Activated CD4-positive, alpha-beta T cell treated with anti-CD3 and anti-CD28 coated beads for 36 hours (primary cell): ENCODE measurements at regions of chr1 and their contacts with region 1.

Region 1: GRCh38 chr1:53860967-53861411 is 22.9 kb upstream of the NDC1 start:
- DNase-seq: peak; percentile 65
- ATAC-seq: peak; percentile 88
- H3K4me3 Mint-ChIP-seq: no peak overlapping the region
- H3K27ac Mint-ChIP-seq: no peak overlapping the region
- H3K4me1 Mint-ChIP-seq: peaks cover 12% of the 10 kb centered on the region
- H3K27me3 Mint-ChIP-seq: no peaks in the 10 kb centered on the region

Region 2: DNA sequence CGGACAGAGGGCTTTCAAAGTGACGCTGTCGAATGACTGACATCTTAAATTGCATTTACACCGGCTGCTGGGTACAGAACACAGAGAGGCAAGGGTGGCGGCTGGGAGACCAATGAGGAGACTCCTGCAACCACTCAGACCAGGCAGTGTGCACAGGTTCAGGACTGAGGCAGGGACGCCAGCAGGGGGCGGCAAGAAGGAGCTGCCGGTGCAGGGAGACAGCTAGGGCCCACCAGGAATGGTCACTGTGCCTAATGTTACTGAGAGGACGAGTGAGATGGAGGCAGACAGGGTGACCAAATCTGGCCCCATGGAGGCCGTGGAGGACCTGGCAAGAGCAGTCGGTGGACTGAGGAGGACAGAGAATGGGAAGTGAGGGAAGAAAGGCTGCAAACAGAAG is 145.5 kb before region 1 on chr1:
- CTCF ChIA-PET with region 1: no interaction called
- POLR2A ChIA-PET with region 1: no interaction called
- intact Hi-C with region 1: no loop called
- DNase-seq: peak; percentile 50
- ATAC-seq: peak; percentile 55
- H3K4me3 Mint-ChIP-seq: no peak overlapping the region
- H3K27ac Mint-ChIP-seq: no peak overlapping the region
- H3K4me1 Mint-ChIP-seq: no peaks in the 10 kb centered on the region
- H3K27me3 Mint-ChIP-seq: no peaks in the 10 kb centered on the region

Region 3: DNA sequence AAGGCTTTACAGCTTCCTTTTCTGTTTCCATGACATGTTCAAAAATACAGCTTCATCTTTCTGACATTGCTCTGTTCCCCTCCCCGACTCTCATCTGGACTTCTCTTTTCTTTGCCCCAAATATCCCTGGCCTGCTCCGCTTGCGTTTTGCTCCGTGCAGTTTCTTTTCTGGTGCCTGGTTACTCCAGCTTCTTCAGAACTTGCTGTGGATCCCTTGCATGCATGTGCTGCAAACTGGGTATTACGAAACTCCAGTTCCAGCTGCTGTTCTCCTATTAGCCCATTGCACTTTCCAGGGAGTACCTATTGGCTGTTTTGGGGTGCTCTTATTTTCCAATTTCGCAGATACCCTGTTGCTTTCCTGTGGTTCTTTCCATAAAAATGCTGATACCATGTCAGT is 13.0 kb before region 1 on chr1:
- CTCF ChIA-PET with region 1: interaction called, 30 read pairs
- POLR2A ChIA-PET with region 1: interaction called, 3 read pairs
- intact Hi-C with region 1: no loop called
- DNase-seq: no peak
- ATAC-seq: no peak
- H3K4me3 Mint-ChIP-seq: no peak overlapping the region
- H3K27ac Mint-ChIP-seq: no peak overlapping the region
- H3K4me1 Mint-ChIP-seq: no peaks in the 10 kb centered on the region
- H3K27me3 Mint-ChIP-seq: peaks cover 5% of the 10 kb centered on the region

Region 4: DNA sequence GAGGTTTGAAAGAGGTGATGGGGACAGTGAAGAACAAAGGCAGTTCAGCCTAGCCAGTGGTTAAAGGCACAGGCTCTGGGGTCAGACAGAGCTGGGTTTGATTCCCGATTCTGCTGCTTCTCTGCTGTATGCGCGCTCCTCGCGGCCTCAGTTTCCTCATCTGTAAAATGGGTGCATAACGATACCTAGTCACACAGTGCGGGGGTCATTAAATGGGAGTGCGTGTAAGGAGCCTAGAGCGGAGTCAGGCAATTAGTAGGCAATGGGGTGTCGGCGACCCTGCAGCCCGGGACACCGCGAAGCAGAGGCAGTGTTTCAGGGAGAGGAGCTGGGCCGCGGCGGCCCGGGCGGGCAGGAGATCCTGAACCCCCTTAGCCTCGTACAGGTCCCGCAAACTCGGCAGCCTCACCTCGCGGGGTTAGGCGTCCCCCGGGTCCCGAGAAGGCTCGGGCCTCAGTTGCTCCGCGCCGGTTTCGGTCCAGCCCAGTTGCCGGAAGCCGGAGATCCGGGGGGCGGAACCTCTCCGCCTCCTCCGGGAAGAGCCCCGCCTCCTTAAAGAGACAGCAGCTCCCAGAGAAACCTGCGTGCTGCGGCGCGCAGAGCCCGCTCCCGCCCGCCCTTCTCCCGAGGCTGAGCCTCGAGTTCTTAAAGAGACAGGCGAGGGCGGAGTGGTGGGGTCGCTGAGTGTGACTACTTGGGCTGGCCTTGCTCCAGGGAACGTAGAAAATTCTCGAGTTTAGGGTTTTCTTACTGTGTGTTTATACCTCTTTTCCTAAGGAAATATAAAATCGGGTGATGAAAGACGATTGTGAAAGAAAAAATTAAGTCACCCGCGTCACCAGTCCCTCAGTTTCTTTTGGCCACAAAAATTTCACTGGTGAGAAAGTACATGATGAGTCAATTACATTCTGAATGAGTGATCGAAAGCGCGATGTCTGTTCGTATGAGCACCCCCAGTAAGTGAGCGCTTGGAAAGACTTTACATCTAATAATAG is 28.6 kb after region 1 on chr1 and contains the start of gene YIPF1:
- CTCF ChIA-PET with region 1: interaction called, 8 read pairs
- POLR2A ChIA-PET with region 1: no interaction called
- intact Hi-C with region 1: loop called in 1 of 2 experiments (anchors 2 kb)
- DNase-seq: peak; percentile 93
- ATAC-seq: peak; percentile 90
- H3K4me3 Mint-ChIP-seq: peak within 1 kb of the TSS; percentile 96
- H3K27ac Mint-ChIP-seq: peak within 1 kb of the TSS; percentile 94
- H3K4me1 Mint-ChIP-seq: peaks cover 38% of the 10 kb centered on the region
- H3K27me3 Mint-ChIP-seq: no peaks in the 10 kb centered on the region
- total RNA-seq, gene YIPF1: 19.0 to 24.4 TPM

Region 5: GRCh38 chr1:53945433-53946251 is 84.7 kb after region 1 on chr1 and contains the start of gene IFT25:
- CTCF ChIA-PET with region 1: interaction called, 93 read pairs
- POLR2A ChIA-PET with region 1: no interaction called
- intact Hi-C with region 1: loop called (anchors 1 kb)
- DNase-seq: peak; percentile 99
- ATAC-seq: peak; percentile 79
- H3K4me3 Mint-ChIP-seq: peak within 1 kb of the TSS; percentile 95
- H3K27ac Mint-ChIP-seq: peak within 1 kb of the TSS; percentile 89
- H3K4me1 Mint-ChIP-seq: peaks cover 50% of the 10 kb centered on the region
- H3K27me3 Mint-ChIP-seq: no peaks in the 10 kb centered on the region
- total RNA-seq, gene IFT25: 56.6 to 62.0 TPM

Region 6: DNA sequence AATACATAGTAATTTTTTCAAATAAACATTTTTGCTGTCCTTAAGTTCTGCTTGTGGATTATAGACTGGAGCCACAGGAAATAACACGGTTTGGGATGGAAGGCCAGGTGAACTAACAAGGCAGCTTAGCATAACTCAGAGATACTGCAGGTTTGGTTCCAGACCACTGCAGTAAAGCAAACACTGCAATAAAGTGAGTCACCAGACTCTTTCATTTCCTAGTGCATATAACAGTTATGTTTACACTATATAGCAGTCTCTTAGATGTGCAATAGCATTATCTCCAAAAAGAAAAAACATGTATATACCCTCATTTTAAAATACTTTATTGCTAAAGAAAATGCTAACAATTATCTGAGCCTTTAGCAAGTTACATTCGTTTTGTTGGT is 107.1 kb after region 1 on chr1:
- CTCF ChIA-PET with region 1: interaction called, 159 read pairs
- POLR2A ChIA-PET with region 1: no interaction called
- intact Hi-C with region 1: no loop called
- DNase-seq: no peak
- ATAC-seq: no peak
- H3K4me3 Mint-ChIP-seq: no peak overlapping the region
- H3K27ac Mint-ChIP-seq: no peak overlapping the region
- H3K4me1 Mint-ChIP-seq: peaks cover 4% of the 10 kb centered on the region
- H3K27me3 Mint-ChIP-seq: no peaks in the 10 kb centered on the region

Region 7: GRCh38 chr1:54081306-54082270 is 220.6 kb after region 1 on chr1:
- CTCF ChIA-PET with region 1: interaction called, 34 read pairs
- POLR2A ChIA-PET with region 1: no interaction called
- intact Hi-C with region 1: loop called in 1 of 2 experiments (anchors 1 kb)
- DNase-seq: peak; percentile 81
- ATAC-seq: peak; percentile 96
- H3K4me3 Mint-ChIP-seq: no peak overlapping the region
- H3K27ac Mint-ChIP-seq: no peak overlapping the region
- H3K4me1 Mint-ChIP-seq: peaks cover 7% of the 10 kb centered on the region
- H3K27me3 Mint-ChIP-seq: no peaks in the 10 kb centered on the region

Region 8: GRCh38 chr1:54406339-54407153 is 545.6 kb after region 1 on chr1 and contains the start of gene SSBP3:
- CTCF ChIA-PET with region 1: no interaction called
- POLR2A ChIA-PET with region 1: no interaction called
- intact Hi-C with region 1: no loop called
- DNase-seq: peak; percentile 95
- ATAC-seq: peak; percentile 84
- H3K4me3 Mint-ChIP-seq: peak within 1 kb of the TSS; percentile 76
- H3K27ac Mint-ChIP-seq: peak within 1 kb of the TSS; percentile 88
- H3K4me1 Mint-ChIP-seq: peaks cover 57% of the 10 kb centered on the region
- H3K27me3 Mint-ChIP-seq: no peaks in the 10 kb centered on the region
- total RNA-seq, gene SSBP3: 40.3 to 64.2 TPM